Activated CD4-positive, alpha-beta memory T cell treated with anti-CD3 and anti-CD28 coated beads, Interleukin-2, amount 10 ng/mL, durations not matched to agents 7 days and 5 days (primary cell): ENCODE measurements at regions of chr19 and their contacts with region 1.

Region 1: GRCh38 chr19:48203732-48204628 is 33.5 kb downstream of the ZSWIM9 start:
- DNase-seq: peak; percentile 93
- H3K4me3 Mint-ChIP-seq: no peak overlapping the region
- H3K27ac Mint-ChIP-seq: no peak overlapping the region
- H3K4me1 Mint-ChIP-seq: peaks cover 25% of the 10 kb centered on the region
- H3K27me3 Mint-ChIP-seq: no peaks in the 10 kb centered on the region

Region 2: DNA sequence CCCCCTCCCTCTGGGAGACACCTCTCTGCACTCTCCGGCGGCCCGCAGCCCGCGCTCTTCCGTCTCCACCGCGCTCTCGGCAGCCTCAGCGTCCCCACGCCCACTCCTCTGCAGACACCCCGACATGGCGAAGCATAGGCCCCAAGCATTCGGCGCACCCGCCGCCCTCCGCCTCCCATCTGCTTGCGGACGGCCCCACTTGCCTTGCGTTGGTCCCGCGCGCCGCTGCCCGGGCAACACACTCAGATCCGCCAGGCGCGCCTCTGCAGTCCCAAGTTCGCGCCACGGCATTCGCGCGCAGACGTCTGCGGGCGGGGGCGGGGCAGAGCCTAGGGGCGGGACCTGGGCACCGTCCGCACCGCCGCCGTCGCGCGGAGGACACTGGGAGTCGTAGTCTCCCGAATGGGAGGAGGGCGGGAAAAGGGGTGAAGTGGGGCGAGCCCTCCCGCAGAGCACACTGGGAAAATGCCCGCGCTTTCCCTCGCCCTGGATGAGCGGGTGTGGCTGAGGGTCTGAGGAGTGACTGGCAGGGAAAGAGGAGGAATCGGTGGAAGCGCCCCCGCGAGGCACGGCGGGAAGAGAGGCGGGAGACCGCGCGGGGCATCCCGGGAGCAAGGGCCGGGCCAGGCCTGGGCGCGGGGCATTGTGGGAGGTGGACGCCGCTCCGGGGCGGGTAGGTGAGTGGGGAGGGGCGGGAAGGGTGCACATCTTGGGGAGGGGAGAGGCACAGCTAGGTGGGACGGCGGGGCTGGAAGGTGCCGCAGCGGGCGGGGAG is 33.8 kb before region 1 on chr19 and contains the starts of genes LIG1 and ZSWIM9:
- CTCF ChIA-PET with region 1: interaction called, 5 read pairs
- POLR2A ChIA-PET with region 1: interaction called, 22 read pairs
- DNase-seq: peak; percentile 93
- H3K4me3 Mint-ChIP-seq: peak within 1 kb of the TSS; percentile 97
- H3K27ac Mint-ChIP-seq: peak within 1 kb of the TSS; percentile 94
- H3K4me1 Mint-ChIP-seq: peaks cover 56% of the 10 kb centered on the region
- H3K27me3 Mint-ChIP-seq: no peaks in the 10 kb centered on the region
- total RNA-seq, gene LIG1: 137 to 146 TPM
- total RNA-seq, gene ZSWIM9: 7.0 to 7.8 TPM

Region 3: GRCh38 chr19:48190288-48190884 is 13.6 kb before region 1 on chr19:
- CTCF ChIA-PET with region 1: interaction called, 31 read pairs
- POLR2A ChIA-PET with region 1: interaction called, 12 read pairs
- DNase-seq: peak; percentile 55
- H3K4me3 Mint-ChIP-seq: no peak overlapping the region
- H3K27ac Mint-ChIP-seq: no peak overlapping the region
- H3K4me1 Mint-ChIP-seq: peaks cover 8% of the 10 kb centered on the region
- H3K27me3 Mint-ChIP-seq: no peaks in the 10 kb centered on the region

Region 4: DNA sequence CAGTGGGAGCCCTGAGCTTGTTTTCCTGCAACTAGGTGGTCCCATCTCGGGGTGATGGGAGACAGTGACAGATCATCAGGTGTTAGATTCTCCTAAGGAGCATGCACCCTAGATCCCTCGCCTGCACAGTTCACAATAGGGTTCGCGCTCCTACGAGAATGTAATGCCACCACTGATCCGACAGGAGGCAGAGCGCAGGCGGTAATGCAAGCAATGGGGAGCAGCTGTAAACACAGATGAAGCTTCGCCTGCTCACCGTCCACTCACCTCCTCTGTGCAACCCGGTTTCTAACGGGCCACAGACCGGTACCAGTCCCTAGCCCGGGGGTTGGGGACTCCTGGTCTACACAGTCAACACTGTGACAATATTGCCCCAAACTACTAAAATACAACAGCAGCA is 13.0 kb after region 1 on chr19:
- CTCF ChIA-PET with region 1: interaction called, 7 read pairs
- POLR2A ChIA-PET with region 1: interaction called, 22 read pairs
- DNase-seq: no peak
- H3K4me3 Mint-ChIP-seq: no peak overlapping the region
- H3K27ac Mint-ChIP-seq: no peak overlapping the region
- H3K4me1 Mint-ChIP-seq: no peaks in the 10 kb centered on the region
- H3K27me3 Mint-ChIP-seq: no peaks in the 10 kb centered on the region

Region 5: DNA sequence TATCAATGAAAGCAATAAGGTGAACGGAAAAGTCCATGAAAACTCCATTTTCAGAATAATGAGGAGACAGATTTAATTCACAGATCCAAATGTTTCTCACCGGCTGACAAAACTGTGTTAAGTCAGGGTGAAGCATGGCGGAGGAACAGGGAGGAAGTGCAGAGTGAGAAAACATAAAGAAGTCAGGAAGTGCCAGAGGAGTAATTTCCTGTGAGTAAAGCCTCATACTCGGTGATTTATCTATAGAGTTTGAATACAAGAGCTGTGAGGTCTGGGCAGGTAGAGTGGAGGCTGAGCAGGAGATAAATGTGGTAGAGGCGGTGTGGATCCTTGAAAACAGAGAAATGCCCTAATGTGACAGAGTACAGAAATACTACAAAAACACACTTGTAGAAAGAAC is 40.3 kb after region 1 on chr19:
- CTCF ChIA-PET with region 1: interaction called, 7 read pairs
- POLR2A ChIA-PET with region 1: interaction called, 34 read pairs
- DNase-seq: peak; percentile 45
- H3K4me3 Mint-ChIP-seq: peak overlapping the region; percentile 70
- H3K27ac Mint-ChIP-seq: peak overlapping the region; percentile 80
- H3K4me1 Mint-ChIP-seq: peaks cover 58% of the 10 kb centered on the region
- H3K27me3 Mint-ChIP-seq: no peaks in the 10 kb centered on the region

Region 6: GRCh38 chr19:48249502-48250014 is 45.6 kb after region 1 on chr19:
- CTCF ChIA-PET with region 1: interaction called, 7 read pairs
- POLR2A ChIA-PET with region 1: interaction called, 101 read pairs
- DNase-seq: peak; percentile 85
- H3K4me3 Mint-ChIP-seq: peak overlapping the region; percentile 82
- H3K27ac Mint-ChIP-seq: peak overlapping the region; percentile 99
- H3K4me1 Mint-ChIP-seq: peaks cover 79% of the 10 kb centered on the region
- H3K27me3 Mint-ChIP-seq: no peaks in the 10 kb centered on the region

Region 7: GRCh38 chr19:48255376-48256303 is 51.7 kb after region 1 on chr19 and contains the start of gene CARD8:
- CTCF ChIA-PET with region 1: interaction called, 25 read pairs
- POLR2A ChIA-PET with region 1: interaction called, 101 read pairs
- DNase-seq: peak; percentile 86
- H3K4me3 Mint-ChIP-seq: peak within 1 kb of the TSS; percentile 98
- H3K27ac Mint-ChIP-seq: peak within 1 kb of the TSS; percentile 95
- H3K4me1 Mint-ChIP-seq: peaks cover 68% of the 10 kb centered on the region
- H3K27me3 Mint-ChIP-seq: no peaks in the 10 kb centered on the region
- total RNA-seq, gene CARD8: 247 to 253 TPM